ENCODE measurements at regions of chr1 and their contacts with region 1.

Region 1: GRCh38 chr1:183915625-183916510 is 110.9 kb downstream of the RGL1 start:
- DNase-seq: peak; percentile 61 to 64
- ATAC-seq: peak; percentile 92 to 95
- H3K4me3 ChIP-seq: no peak overlapping the region
- H3K27ac ChIP-seq: peak overlapping the region in 3 of 4 donors; percentile 27 to 46 (median 36)
- H3K4me1 ChIP-seq: peaks cover 8 to 9% of the 10 kb centered on the region in 2 donors
- H3K27me3 ChIP-seq: no peaks in the 10 kb centered on the region
- CTCF ChIP-seq: peak; percentile 81 to 88 (median 84)
- POLR2A ChIP-seq: no peak

Region 2: DNA sequence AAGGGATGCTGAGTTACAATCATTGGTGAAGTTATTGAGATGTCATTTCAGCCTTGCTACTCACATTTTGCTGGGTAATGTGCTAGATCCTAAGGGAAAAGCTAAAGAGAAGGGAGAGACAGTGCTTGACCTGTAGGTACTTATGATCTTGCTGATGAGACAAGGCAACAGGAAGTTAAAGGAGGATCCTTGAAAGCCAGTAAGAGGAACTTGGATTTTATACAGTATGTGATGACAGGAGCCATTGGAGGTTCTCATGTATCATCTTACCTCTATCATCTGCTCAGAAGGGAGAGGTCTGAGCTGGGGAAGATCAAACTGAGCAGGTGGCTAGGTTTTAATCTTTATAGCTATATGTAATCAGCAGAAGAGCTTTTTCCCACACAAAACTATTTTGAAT is 269.1 kb before region 1 on chr1:
- in situ Hi-C with region 1: loop called in 2 of 4 experiments (anchors 5 kb)
- intact Hi-C with region 1: no loop called
- DNase-seq: no peak
- ATAC-seq: no peak
- H3K4me3 ChIP-seq: no peak overlapping the region
- H3K27ac ChIP-seq: no peak overlapping the region
- H3K4me1 ChIP-seq: no peaks in the 10 kb centered on the region
- H3K27me3 ChIP-seq: no peaks in the 10 kb centered on the region
- CTCF ChIP-seq: no peak
- POLR2A ChIP-seq: no peak

Region 3: DNA sequence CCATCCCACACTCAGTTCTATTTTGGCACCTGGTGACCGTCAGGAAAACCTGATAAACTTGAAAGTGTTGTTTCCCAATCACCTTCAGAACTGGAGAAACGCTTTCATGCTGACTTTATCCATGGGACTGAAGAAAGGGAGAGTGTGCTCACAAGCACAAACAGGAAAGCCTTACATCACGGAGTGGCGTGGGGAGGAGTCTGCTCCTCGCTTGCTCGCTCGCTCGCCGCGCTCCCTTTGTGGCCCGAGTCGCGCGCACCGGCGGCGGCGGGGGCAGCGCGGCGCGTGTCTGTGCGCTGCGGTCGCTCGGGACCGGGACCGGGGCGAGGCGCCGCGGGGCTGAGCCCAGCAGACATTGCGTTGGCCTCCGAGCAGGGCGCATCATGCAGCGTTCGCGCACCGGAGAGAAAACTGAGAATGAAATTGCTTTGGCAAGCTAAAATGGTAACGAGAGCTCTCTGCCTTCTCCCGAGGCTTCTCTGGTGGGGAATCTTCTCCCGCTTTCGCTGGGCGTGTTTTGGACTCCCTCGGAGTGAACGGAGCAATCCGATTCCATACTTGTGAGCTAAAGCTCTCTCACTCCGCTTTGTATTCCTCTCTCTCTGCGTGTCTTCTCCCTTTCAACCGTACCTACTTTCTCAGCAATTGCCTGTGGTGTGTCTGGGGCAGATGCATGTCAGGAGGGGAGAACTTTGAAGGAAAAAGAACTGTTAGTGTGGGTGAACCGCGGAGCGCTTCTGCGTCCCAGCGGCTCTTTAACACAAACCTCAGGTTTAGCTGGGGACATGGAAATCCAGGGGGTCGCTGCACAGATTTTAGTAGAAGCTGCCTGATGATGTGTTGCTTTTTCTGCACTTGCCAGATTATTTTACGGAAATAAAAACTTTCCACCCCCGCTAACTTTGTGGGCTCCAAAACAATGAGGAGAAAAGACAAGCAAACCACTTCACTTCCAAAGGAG is 110.7 kb before region 1 on chr1 and contains the start of gene RGL1:
- in situ Hi-C with region 1: loop called in 1 of 4 experiments (anchors 10 kb)
- intact Hi-C with region 1: loop called (anchors 10 kb)
- DNase-seq: peak; percentile 44 to 46
- ATAC-seq: peak; percentile 74 to 78
- H3K4me3 ChIP-seq: peak within 1 kb of the TSS; percentile 57 to 70 (median 60)
- H3K27ac ChIP-seq: peak within 1 kb of the TSS; percentile 36 to 71 (median 52)
- H3K4me1 ChIP-seq: peaks cover 5 to 9% of the 10 kb centered on the region in 2 donors
- H3K27me3 ChIP-seq: no peaks in the 10 kb centered on the region
- CTCF ChIP-seq: no peak
- POLR2A ChIP-seq: peak; percentile 48 to 74
- total RNA-seq, gene RGL1: 4.0 to 5.1 (median 4.8) TPM

Measured in gastrocnemius medialis (tissue), 4 donors.